Esophagus muscularis mucosa (tissue), 4 donors: ENCODE measurements at regions of chr2 and their contacts with region 1.

Region 1: DNA sequence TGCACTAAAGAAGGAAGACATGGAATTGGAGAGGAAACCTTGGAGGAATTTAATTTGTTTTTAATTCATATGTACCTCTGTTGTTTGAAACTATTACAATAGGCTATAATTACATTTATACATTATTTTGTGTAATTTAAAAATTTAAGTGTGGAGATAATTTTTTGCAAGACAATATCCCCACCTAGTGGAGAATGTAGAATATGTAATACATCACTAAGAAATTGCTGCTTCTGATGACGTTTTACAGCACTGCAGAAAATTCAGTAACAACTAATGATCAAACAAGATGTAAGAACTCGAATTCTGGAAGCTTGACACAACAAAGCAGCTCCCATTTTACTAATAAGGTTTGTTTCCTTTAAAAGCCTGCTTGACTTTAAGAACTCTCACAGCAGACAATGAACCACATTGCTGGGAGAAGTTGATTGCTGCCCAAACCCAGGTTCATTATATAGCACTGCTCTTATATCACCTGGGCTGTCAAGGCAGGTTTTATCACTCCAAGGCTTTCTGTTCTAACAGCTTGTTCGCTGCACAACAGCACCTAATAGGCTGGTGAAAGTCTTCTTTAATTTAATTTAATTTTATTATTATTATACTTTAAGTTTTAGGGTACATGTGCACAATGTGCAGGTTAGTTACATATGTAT is 53.4 kb downstream of the THADA start:
- DNase-seq: no peak
- H3K4me3 ChIP-seq: no peak overlapping the region
- H3K27ac ChIP-seq: no peak overlapping the region
- H3K4me1 ChIP-seq: peaks cover 3 to 34% (median 24%) of the 10 kb centered on the region in 4 donors
- H3K27me3 ChIP-seq: no peaks in the 10 kb centered on the region
- CTCF ChIP-seq: peak; percentile 58 to 71 (median 65)
- EP300 ChIP-seq: no peak
- POLR2A ChIP-seq: no peak

Region 2: GRCh38 chr2:42901076-42901640 is 641.3 kb before region 1 on chr2:
- intact Hi-C with region 1: no loop called
- DNase-seq: no peak
- H3K4me3 ChIP-seq: no peak overlapping the region
- H3K27ac ChIP-seq: peak overlapping the region; percentile 37 to 63 (median 52)
- H3K4me1 ChIP-seq: peaks cover 40 to 64% (median 59%) of the 10 kb centered on the region in 4 donors
- H3K27me3 ChIP-seq: no peaks in the 10 kb centered on the region
- CTCF ChIP-seq: no peak
- EP300 ChIP-seq: no peak
- POLR2A ChIP-seq: no peak

Region 3: GRCh38 chr2:42974721-42975717 is 567.4 kb before region 1 on chr2:
- intact Hi-C with region 1: loop called (anchors 10 kb)
- DNase-seq: no peak
- H3K4me3 ChIP-seq: peak overlapping the region; percentile 50 to 58 (median 52)
- H3K27ac ChIP-seq: peak overlapping the region; percentile 53 to 60 (median 56)
- H3K4me1 ChIP-seq: peaks cover 12 to 25% (median 20%) of the 10 kb centered on the region in 4 donors
- H3K27me3 ChIP-seq: no peaks in the 10 kb centered on the region
- CTCF ChIP-seq: peak; percentile 90 to 96 (median 90)
- EP300 ChIP-seq: no peak
- POLR2A ChIP-seq: no peak

Region 4: DNA sequence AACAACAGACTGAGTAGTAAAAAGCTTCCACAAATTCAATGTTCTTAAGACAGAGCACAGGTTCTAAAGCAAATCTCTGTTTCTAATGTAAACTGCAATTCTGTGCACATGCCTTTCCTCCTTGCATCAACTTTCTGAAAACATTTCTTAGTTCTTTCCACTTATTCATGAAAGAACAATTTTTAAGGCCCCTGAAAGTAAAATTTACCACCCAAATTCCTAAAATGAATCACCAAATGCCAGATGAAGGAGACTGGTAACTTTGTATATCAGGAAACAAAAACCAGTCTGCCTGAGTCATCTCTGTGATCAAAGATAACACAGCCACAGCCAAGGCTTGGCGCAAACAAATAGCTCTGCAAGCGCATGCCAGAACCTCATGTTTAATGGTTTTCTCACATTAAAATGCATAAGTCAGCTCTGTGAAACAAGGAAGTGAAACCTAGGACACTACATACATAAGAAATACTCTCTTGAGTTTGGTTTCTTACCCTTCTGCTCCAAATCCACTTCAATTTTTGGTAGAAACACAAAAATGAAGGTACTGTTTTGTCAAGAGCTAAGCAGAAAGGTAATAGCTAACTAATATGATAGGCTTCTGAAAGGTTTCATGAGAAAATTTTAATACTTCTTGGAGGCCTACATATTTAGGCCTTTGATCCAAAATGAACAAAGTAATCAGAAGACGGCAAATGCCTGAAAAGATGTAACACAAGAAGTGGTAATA is 115.9 kb before region 1 on chr2:
- intact Hi-C with region 1: no loop called
- DNase-seq: no peak
- H3K4me3 ChIP-seq: no peak overlapping the region
- H3K27ac ChIP-seq: peak overlapping the region; percentile 11 to 47 (median 23)
- H3K4me1 ChIP-seq: peaks cover 5 to 19% (median 16%) of the 10 kb centered on the region in 4 donors
- H3K27me3 ChIP-seq: no peaks in the 10 kb centered on the region
- CTCF ChIP-seq: no peak
- EP300 ChIP-seq: no peak
- POLR2A ChIP-seq: no peak